ENCODE measurements at regions of chr2 and their contacts with region 1.

Region 1: DNA sequence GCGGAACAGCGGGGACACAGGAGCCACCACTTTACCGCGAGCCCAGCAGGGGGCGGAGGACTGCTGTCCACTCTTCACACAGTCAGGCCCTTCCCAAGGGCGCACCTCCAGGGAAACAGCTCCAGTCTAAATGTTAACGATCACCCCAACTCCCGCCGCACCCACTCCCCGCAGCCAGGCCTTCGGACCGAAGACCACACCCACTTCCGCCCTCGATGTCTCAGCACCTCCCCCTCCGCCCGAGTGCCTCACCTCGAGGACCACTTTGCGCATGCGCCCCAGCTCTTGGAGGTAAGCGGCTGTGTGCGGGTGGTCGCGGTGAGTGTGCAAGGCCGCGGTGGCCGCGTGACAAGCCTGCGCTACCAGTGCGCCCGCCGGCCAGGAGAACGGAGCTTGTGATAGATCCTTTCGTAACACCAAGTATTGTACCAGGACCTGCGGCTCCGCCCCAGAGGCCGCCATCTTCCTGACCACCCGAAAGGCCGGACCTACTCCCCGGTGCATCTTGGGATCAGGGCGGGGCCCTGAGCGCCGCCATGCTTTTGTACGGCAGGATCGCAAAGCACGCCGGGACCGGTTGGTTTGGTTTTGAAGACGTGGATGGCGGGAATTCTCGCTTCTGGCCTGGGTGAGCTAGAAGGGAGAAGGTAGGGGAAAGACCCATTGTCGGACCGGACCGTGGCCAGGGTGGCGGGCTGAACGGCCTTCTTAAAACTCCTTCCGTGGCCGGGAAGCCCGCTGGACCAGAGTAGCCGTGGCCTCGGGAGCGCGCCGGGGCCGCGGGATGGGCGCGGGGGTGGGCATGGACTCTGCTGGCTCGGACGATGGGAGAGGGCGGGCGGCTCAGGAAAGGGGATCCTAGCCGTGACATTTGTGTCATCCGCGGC is at the starts of genes CENPO and PTRHD1:
- DNase-seq: peak; percentile 96
- CTCF ChIP-seq: peak; percentile 36

Region 2: DNA sequence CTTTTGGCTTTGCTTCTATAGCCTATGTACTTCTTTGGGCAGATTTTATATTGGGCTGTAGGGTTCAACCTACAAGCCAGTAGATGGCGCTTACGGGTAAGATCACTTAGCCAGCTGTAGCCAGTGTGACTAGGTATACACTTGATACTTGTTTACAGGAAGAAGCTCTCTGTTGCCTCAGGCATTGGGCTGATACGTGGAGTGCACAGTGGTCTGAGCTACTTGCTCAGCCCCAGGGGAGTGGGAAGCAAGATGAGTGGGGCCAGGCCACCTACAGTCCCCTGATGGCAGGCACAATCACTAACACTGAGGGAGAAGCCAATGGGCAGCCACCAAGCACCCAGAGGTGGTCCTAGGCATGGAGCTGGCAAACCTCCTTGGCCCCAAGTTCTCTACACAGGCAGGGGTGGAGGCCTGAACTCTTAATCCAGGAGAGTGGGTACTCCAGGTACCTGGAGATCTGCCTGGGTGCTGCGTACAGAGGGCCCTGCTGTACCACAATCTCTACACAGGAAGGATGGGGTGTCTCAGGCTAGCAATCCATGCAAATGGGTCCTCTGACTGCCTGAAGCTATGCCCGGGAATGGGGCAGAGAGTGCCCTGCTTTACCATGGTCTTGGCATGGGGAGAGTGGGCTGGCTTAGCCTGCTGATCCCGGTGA is 179.8 kb before region 1 on chr2:
- in situ Hi-C with region 1: loop called (anchors 25 kb)
- DNase-seq: peak; percentile 39
- CTCF ChIP-seq: peak; percentile 66

Region 3: GRCh38 chr2:25684577-25685473 is 891.7 kb after region 1 on chr2:
- in situ Hi-C with region 1: no loop called
- DNase-seq: no peak
- CTCF ChIP-seq: no peak

Measured in GM13977 (cell line).